HCT116 (cell line): ENCODE measurements at regions of chr20 and their contacts with region 1.

Region 1: GRCh38 chr20:22586645-22587310 is 2.4 kb upstream of the FOXA2 start:
- DNase-seq: no peak
- ATAC-seq: peak; percentile 80
- H3K4me3 ChIP-seq: peak overlapping the region in 1 of 2 experiments; percentile 34; a peak in 2 of 4 replicates
- H3K27ac ChIP-seq: no peak overlapping the region
- H3K4me1 ChIP-seq: no peaks in the 10 kb centered on the region
- H3K27me3 ChIP-seq: peaks cover 23% of the 10 kb centered on the region
- CTCF ChIP-seq: peak; percentile 73 to 77 (median 73)
- POLR2A ChIP-seq: no peak
- RAD21 ChIP-seq: peak; percentile 80

Region 2: DNA sequence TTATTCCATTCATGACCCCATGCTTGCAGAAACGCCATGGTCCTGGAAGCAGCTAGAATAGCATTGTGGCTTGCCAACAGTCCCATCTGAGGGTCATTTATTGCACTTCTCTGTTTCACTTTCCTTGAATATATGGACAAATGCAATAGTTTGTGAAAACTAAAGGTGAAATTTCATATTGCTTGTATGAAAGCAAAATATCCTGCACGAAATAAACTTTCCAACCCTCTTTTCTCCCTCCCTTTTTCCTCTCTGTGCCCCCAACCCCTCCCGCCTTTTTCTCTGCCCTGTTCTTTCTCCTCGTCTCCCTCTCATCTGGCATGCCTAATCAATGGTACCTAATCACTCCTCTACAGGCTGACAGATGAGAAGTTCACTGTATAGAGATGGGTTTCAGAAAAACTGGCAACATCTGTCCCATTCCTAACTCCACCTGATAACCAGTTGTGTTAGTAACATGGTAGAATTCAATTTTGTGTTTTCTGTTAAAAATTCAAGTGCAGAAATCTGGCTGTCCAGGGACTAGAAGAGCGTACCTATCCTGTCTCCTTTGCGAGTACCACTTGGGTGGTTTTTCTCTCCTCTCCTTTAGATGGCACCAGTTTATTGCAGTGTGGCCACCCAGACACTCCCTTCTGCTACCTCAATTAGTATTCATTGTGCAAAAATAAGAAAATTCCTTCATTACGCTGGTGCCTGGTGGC is 201.0 kb before region 1 on chr20:
- CTCF ChIA-PET with region 1: interaction called, 12 read pairs
- POLR2A ChIA-PET with region 1: no interaction called
- RAD21 ChIA-PET with region 1: no interaction called
- intact Hi-C with region 1: loop called (anchors 1 kb)
- DNase-seq: no peak
- ATAC-seq: peak; percentile 51
- H3K4me3 ChIP-seq: no peak overlapping the region
- H3K27ac ChIP-seq: no peak overlapping the region
- H3K4me1 ChIP-seq: peaks cover 17 to 33% of the 10 kb centered on the region in 2 experiments
- H3K27me3 ChIP-seq: no peaks in the 10 kb centered on the region
- CTCF ChIP-seq: peak; percentile 31 to 52 (median 42); a peak in 4 of 6 replicates
- POLR2A ChIP-seq: no peak
- RAD21 ChIP-seq: peak; percentile 81

Region 3: DNA sequence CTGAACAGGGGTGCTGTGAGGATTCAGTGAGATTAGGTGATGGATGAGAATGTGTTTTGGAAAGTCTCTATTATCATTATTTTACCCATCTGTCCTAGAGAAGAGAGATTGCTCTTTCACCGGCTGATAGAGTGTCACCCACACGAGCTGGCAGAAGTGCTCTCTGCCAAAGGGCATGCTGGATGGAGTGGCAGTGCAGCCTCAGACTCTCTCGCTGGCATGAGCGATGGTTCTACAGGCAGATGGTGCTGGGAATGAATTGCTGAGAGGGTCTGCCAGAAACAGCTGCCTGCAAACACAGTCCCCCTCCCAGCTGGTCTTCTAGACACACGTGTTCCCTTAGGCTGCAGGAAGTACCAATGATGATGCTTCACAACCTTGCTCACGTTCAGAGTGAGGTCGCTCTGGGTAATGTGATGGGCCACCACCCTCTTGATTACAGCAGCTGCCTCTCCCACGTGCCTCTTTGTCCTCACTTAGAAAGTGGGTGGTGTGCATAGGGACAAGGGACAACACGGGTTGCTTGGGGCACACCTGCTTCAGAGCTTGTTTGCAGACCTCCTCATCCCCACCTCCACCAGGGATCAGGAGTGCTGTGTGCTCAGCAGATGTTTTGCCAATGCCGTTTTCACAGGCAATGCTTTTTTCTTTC is 87.1 kb before region 1 on chr20:
- CTCF ChIA-PET with region 1: no interaction called
- POLR2A ChIA-PET with region 1: no interaction called
- RAD21 ChIA-PET with region 1: no interaction called
- intact Hi-C with region 1: no loop called
- DNase-seq: no peak
- ATAC-seq: no peak
- H3K4me3 ChIP-seq: no peak overlapping the region
- H3K27ac ChIP-seq: no peak overlapping the region
- H3K4me1 ChIP-seq: no peaks in the 10 kb centered on the region
- H3K27me3 ChIP-seq: peaks cover 19% of the 10 kb centered on the region; the same call in 1 of the 2 replicates
- CTCF ChIP-seq: no peak
- POLR2A ChIP-seq: no peak
- RAD21 ChIP-seq: no peak

Region 4: DNA sequence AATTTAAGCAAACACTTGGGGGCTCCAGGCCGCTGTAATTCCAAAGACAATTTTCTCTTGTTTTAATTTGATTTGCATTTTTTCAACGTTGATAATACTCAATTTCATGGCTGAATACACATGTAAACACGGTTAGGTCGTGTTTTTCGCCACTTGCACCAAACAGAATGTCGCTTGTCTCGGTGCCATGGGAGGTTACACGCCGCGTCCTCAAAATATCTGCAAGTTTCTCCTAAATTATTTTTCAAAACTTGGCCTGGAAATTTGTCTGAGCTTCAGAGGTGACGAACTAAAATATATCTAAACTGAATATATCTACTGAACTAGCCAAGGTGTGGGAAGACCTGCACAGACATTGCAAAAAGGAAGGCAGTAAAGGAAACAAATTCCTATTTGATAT is 17.4 kb before region 1 on chr20:
- CTCF ChIA-PET with region 1: interaction called, 10 read pairs
- POLR2A ChIA-PET with region 1: no interaction called
- RAD21 ChIA-PET with region 1: no interaction called
- intact Hi-C with region 1: no loop called
- DNase-seq: no peak
- ATAC-seq: no peak
- H3K4me3 ChIP-seq: no peak overlapping the region
- H3K27ac ChIP-seq: no peak overlapping the region
- H3K4me1 ChIP-seq: no peaks in the 10 kb centered on the region
- H3K27me3 ChIP-seq: peaks cover 9% of the 10 kb centered on the region
- CTCF ChIP-seq: no peak
- POLR2A ChIP-seq: no peak
- RAD21 ChIP-seq: no peak

Region 5: GRCh38 chr20:22597303-22597702 is 10.5 kb after region 1 on chr20:
- CTCF ChIA-PET with region 1: interaction called, 11 read pairs
- POLR2A ChIA-PET with region 1: no interaction called
- RAD21 ChIA-PET with region 1: no interaction called
- intact Hi-C with region 1: no loop called
- DNase-seq: no peak
- ATAC-seq: no peak
- H3K4me3 ChIP-seq: no peak overlapping the region
- H3K27ac ChIP-seq: no peak overlapping the region
- H3K4me1 ChIP-seq: no peaks in the 10 kb centered on the region
- H3K27me3 ChIP-seq: peaks cover 24% of the 10 kb centered on the region; the same call in 1 of the 2 replicates
- CTCF ChIP-seq: no peak
- POLR2A ChIP-seq: no peak
- RAD21 ChIP-seq: no peak